Activated CD4-positive, alpha-beta memory T cell treated with anti-CD3 and anti-CD28 coated beads, Interleukin-2, amount 10 ng/mL, durations not matched to agents 7 days and 5 days (primary cell): ENCODE measurements at regions of chr11 and their contacts with region 1.

Region 1: GRCh38 chr11:57644748-57645688 is 4.7 kb downstream of the YPEL4 start:
- DNase-seq: peak; percentile 85
- H3K4me3 Mint-ChIP-seq: no peak overlapping the region
- H3K27ac Mint-ChIP-seq: no peak overlapping the region
- H3K4me1 Mint-ChIP-seq: peaks cover 31% of the 10 kb centered on the region
- H3K27me3 Mint-ChIP-seq: peaks cover 64% of the 10 kb centered on the region

Region 2: DNA sequence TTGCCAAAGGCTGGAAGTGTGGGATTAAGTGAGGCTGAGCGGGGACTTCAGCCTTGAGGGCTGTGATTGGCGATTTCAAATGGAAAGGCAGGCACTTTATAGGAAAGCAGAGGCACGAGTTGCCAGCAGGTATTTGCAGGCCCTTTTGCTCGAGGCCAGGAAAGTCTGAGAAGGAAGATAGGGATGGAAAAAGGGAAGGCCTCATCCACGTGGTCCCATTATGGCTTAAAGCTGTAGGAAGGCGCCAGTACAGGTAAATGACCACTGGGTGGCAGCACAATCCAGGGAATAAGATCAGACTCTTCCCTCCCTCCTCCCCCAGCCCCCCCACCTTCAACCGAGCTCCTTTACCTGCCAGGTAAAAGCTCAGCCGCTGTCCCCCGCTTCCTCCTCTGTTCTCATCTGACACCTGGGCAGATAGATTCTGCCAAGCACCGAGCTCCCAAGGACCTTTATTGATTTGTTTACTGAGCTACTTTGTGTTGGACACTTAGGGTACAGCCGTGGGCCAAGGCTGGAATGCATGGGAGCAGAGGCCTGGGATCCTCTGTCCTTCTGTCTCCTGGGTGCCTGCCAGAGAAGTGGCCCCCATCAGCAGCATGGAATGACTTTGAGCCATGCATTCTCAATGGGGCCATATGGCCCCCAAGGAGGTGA is 299.3 kb before region 1 on chr11:
- CTCF ChIA-PET with region 1: interaction called, 12 read pairs
- POLR2A ChIA-PET with region 1: no interaction called
- DNase-seq: peak; percentile 67
- H3K4me3 Mint-ChIP-seq: no peak overlapping the region
- H3K27ac Mint-ChIP-seq: no peak overlapping the region
- H3K4me1 Mint-ChIP-seq: peaks cover 2% of the 10 kb centered on the region
- H3K27me3 Mint-ChIP-seq: peaks cover 5% of the 10 kb centered on the region

Region 3: DNA sequence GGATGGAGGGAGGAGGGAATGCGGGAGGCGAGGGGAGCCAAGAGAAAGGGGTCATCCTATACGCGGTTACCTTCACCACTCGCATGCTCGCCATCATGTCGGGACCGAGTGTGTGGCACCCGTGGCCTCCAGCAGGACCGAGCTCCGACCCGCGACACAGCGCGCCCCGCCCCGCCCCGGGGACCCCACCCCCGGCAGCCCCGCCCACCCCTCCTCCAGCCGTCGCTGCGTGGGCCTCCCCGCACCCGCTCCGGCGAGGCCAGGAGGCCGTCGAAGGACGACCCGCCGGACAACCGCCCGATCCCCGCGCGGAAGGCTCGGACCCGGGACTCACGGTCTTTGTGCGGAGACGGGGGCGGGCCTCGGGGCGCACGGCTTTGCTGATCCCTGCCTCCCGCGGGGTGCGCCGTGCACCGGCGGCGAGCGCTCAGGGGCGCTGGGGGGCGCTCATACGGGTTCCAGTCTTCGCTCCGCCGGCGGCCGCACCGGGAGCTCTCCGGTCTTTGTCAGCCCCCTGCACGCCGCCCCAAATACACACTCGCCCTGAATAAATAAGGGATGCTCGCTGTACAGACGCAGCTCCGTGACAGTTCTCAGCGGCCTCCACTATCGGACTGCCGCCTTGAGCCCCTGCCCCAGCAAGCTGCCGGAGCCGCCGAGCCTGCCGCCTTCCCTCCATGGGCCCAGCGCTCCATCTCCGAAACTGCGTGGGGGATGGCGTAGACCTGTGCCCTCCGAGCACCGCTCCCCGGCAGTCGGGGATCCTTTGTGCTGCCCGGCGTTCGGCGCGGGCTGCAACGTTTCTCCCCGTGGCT is 77.3 kb before region 1 on chr11 and contains the start of gene UBE2L6:
- CTCF ChIA-PET with region 1: interaction called, 206 read pairs
- POLR2A ChIA-PET with region 1: interaction called, 15 read pairs
- DNase-seq: peak; percentile 68
- H3K4me3 Mint-ChIP-seq: peak within 1 kb of the TSS; percentile 99
- H3K27ac Mint-ChIP-seq: peak within 1 kb of the TSS; percentile 98
- H3K4me1 Mint-ChIP-seq: peaks cover 30% of the 10 kb centered on the region
- H3K27me3 Mint-ChIP-seq: no peaks in the 10 kb centered on the region
- total RNA-seq, gene UBE2L6: 281 to 285 TPM

Region 4: GRCh38 chr11:57630193-57630592 is 14.8 kb before region 1 on chr11:
- CTCF ChIA-PET with region 1: interaction called, 36 read pairs
- POLR2A ChIA-PET with region 1: no interaction called
- DNase-seq: no peak
- H3K4me3 Mint-ChIP-seq: no peak overlapping the region
- H3K27ac Mint-ChIP-seq: no peak overlapping the region
- H3K4me1 Mint-ChIP-seq: no peaks in the 10 kb centered on the region
- H3K27me3 Mint-ChIP-seq: peaks cover 27% of the 10 kb centered on the region

Region 5: DNA sequence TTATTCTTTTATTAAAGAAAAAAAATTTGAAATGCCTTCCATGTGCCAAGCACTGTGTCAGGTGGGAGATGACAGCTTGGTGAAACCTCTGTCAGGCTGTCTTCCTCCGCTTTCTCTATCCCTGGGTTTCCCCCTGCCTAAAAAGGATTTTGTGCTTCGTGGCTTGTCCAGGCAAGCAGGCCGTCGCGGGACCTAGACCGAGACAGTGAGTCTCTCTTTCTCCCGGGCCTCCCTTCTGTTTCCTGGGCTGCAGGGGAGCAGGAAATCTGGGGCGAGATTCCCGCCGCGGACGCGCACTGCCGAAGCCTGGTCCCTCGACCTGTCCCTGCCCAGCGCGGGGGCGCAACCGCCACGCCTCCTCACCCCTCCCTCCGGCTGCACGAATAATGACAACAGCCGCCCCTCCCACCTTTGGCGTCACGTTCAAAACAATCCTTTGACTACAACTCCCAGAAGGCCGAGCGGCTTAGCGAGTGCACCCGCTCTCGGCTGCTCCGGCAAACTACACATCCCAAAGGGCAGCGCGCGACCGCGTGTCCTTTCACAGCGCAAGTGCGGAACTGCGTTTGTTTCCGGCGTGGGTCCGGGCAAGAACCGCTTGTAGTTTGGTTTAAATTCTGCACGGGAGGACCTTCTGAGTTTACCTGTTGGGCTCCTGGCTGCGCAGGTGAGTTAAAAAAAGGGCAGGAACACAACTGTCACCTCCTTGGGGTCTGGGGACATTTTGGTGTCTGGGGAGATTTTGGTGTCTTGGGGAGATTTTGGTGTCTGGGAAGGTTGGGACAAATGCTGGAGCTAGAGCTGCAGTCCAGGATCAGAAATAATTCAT is 12.4 kb after region 1 on chr11 and contains the start of gene CLP1:
- CTCF ChIA-PET with region 1: interaction called, 19 read pairs
- POLR2A ChIA-PET with region 1: interaction called, 3 read pairs
- DNase-seq: peak; percentile 99
- H3K4me3 Mint-ChIP-seq: peak within 1 kb of the TSS; percentile 93
- H3K27ac Mint-ChIP-seq: peak within 1 kb of the TSS; percentile 91
- H3K4me1 Mint-ChIP-seq: peaks cover 39% of the 10 kb centered on the region
- H3K27me3 Mint-ChIP-seq: no peaks in the 10 kb centered on the region
- total RNA-seq, gene CLP1: 14.8 to 17.5 TPM

Region 6: DNA sequence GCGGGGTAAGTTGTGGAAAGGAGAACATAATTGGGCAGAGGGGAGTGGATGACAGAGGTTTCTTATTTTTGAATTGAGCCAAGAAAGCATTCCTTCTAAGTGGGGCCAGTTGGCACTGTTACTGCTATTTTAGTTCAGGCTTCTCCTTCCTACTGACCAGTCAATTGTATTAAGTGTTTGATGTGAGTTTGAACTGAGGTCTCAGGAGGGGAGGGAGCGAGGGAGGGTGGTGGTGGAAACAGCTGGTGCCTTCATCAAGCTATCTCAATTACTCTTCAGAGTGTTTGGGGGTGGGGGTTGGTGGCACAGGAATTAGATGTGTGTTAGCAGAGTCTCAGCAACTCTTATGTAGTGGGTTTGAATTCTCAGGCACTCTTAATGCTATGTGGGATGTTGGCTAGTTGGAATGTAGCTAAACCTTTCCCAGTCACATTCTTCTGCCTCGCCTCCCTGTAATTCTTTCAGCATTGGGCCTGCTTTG is 131.1 kb after region 1 on chr11:
- CTCF ChIA-PET with region 1: no interaction called
- POLR2A ChIA-PET with region 1: no interaction called
- DNase-seq: no peak
- H3K4me3 Mint-ChIP-seq: no peak overlapping the region
- H3K27ac Mint-ChIP-seq: no peak overlapping the region
- H3K4me1 Mint-ChIP-seq: peaks cover 4% of the 10 kb centered on the region
- H3K27me3 Mint-ChIP-seq: peaks cover 4% of the 10 kb centered on the region